PC-9 (cell line): ENCODE measurements at regions of chr4 and their contacts with region 1.

Region 1: GRCh38 chr4:76562161-76562560 is 127.1 kb downstream of the SHROOM3 start:
- DNase-seq: peak in 1 of 2 experiments; percentile 72
- H3K4me3 ChIP-seq: peak overlapping the region; percentile 13; the same call in 1 of the 2 replicates
- H3K27ac ChIP-seq: peak overlapping the region; percentile 97
- H3K4me1 ChIP-seq: peaks cover 32% of the 10 kb centered on the region
- H3K27me3 ChIP-seq: no peaks in the 10 kb centered on the region
- CTCF ChIP-seq: no peak

Region 2: DNA sequence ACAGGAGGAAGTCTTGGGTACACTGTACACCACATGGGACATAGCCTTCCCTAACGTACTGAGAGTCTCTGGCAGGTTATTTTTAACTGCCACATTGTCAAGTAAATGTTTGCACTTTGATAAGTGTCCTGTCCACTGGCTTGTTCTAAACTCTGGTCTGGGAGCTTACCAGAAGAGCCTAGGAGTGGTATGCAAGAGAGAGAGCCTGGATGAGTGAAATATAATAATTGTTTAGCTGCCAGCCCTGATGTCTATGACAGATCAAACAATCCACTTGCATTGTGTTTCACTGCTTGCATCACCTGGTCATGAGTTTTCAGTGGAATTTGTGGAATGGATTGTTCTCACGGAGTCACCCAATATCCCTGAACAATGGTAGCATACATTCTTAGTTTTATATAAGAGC is 35.6 kb before region 1 on chr4:
- CTCF ChIA-PET with region 1: no interaction called
- POLR2A ChIA-PET with region 1: interaction called, 3 read pairs
- intact Hi-C with region 1: loop called (anchors 5 kb)
- DNase-seq: peak; percentile 15 to 47
- H3K4me3 ChIP-seq: no peak overlapping the region
- H3K27ac ChIP-seq: no peak overlapping the region
- H3K4me1 ChIP-seq: no peaks in the 10 kb centered on the region
- H3K27me3 ChIP-seq: no peaks in the 10 kb centered on the region
- CTCF ChIP-seq: no peak

Region 3: DNA sequence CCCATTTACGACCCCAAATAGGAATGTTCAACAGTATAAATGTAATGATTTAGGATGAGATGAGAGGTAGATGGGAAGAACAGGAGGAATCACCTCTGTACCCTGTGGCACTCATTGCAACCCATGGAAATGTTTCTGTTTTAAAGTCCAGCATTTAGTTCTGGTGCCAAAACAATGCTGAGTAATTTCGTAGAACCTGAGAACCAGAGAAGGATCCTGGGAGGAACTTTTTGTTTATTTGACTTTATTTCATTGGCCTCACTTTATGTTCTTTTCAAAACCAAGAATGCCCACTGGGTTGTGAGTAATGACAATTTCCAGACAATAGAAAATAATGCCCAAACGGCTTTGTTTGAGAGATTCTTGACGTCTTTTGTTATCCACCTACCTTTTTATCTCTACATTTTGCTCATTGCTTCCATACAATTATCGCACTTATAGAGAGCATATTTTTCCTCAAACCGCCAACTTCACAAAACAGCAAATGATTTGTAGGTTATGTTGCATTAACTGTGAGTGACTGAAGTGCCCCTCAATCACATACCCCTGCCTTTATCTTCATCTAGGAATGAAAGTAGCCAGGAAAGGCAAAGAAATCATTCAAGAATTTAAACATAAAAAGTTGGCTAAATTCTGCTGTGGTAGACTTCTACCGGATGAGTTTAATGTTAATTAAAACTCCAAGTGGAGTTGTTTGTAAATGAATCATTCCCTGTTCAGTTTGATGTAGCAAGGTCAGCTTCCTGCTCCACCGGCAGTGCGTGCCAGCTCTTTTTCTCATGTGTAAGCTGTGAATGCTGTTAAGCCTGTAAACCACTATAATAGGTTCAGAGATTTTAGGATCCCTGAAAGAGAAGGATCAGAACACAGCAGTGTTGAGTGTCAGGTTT is 15.6 kb before region 1 on chr4:
- CTCF ChIA-PET with region 1: no interaction called
- POLR2A ChIA-PET with region 1: interaction called, 4 read pairs
- intact Hi-C with region 1: loop called (anchors 2 kb)
- DNase-seq: peak; percentile 54 to 87
- H3K4me3 ChIP-seq: no peak overlapping the region
- H3K27ac ChIP-seq: peak overlapping the region; percentile 68
- H3K4me1 ChIP-seq: peaks cover 23% of the 10 kb centered on the region
- H3K27me3 ChIP-seq: no peaks in the 10 kb centered on the region
- CTCF ChIP-seq: no peak

Region 4: GRCh38 chr4:76579610-76580375 is 17.6 kb after region 1 on chr4:
- CTCF ChIA-PET with region 1: no interaction called
- POLR2A ChIA-PET with region 1: interaction called, 39 read pairs
- intact Hi-C with region 1: no loop called
- DNase-seq: no peak
- H3K4me3 ChIP-seq: no peak overlapping the region
- H3K27ac ChIP-seq: no peak overlapping the region
- H3K4me1 ChIP-seq: no peaks in the 10 kb centered on the region
- H3K27me3 ChIP-seq: no peaks in the 10 kb centered on the region
- CTCF ChIP-seq: no peak